GM12878 (cell line): ENCODE measurements at regions of chr9 and their contacts with region 1.

Region 1: GRCh38 chr9:117644133-117644931 is 59.9 kb upstream of the TLR4 start:
- DNase-seq: peak; percentile 21
- ATAC-seq: peak; percentile 89
- H3K4me3 ChIP-seq: no peak overlapping the region
- H3K27ac ChIP-seq: no peak overlapping the region
- H3K4me1 ChIP-seq: peaks cover 5% of the 10 kb centered on the region; the same call in 1 of the 2 replicates
- H3K27me3 ChIP-seq: no peaks in the 10 kb centered on the region
- CTCF ChIP-seq: peak; percentile 91 to 99 (median 97)
- EP300 ChIP-seq: no peak
- POLR2A ChIP-seq: no peak
- RAD21 ChIP-seq: peak; percentile 97

Region 2: GRCh38 chr9:117325110-117325731 is 319.1 kb before region 1 on chr9:
- CTCF ChIA-PET with region 1: no interaction called
- POLR2A ChIA-PET with region 1: no interaction called
- RAD21 ChIA-PET with region 1: no interaction called
- SMC1A ChIA-PET with region 1: no interaction called
- in situ Hi-C with region 1: no loop called
- intact Hi-C with region 1: no loop called
- DNase-seq: no peak
- ATAC-seq: no peak
- H3K4me3 ChIP-seq: no peak overlapping the region
- H3K27ac ChIP-seq: no peak overlapping the region
- H3K4me1 ChIP-seq: no peaks in the 10 kb centered on the region
- H3K27me3 ChIP-seq: no peaks in the 10 kb centered on the region
- CTCF ChIP-seq: no peak
- EP300 ChIP-seq: no peak
- POLR2A ChIP-seq: no peak
- RAD21 ChIP-seq: no peak

Region 3: DNA sequence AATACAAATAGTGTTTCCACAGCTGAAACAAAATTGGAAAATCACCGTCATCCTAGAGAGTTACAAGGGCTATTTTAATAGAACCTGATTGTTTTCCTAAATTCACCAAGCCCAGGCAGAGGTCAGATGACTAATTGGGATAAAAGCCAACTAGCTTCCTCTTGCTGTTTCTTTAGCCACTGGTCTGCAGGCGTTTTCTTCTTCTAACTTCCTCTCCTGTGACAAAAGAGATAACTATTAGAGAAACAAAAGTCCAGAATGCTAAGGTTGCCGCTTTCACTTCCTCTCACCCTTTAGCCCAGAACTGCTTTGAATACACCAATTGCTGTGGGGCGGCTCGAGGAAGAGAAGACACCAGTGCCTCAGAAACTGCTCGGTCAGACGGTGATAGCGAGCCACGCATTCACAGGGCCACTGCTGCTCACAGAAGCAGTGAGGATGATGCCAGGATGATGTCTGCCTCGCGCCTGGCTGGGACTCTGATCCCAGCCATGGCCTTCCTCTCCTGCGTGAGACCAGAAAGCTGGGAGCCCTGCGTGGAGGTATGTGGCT is 59.8 kb after region 1 on chr9 and contains the start of gene TLR4:
- CTCF ChIA-PET with region 1: no interaction called
- POLR2A ChIA-PET with region 1: no interaction called
- RAD21 ChIA-PET with region 1: no interaction called
- SMC1A ChIA-PET with region 1: no interaction called
- in situ Hi-C with region 1: no loop called
- intact Hi-C with region 1: loop called (anchors 5 kb)
- DNase-seq: peak; percentile 45
- ATAC-seq: peak; percentile 99
- H3K4me3 ChIP-seq: no peak within 1 kb of the TSS
- H3K27ac ChIP-seq: no peak within 1 kb of the TSS
- H3K4me1 ChIP-seq: peaks cover 3% of the 10 kb centered on the region; the same call in 1 of the 2 replicates
- H3K27me3 ChIP-seq: no peaks in the 10 kb centered on the region
- CTCF ChIP-seq: no peak
- EP300 ChIP-seq: peak; percentile 15 to 54; a peak in 2 of 4 replicates
- POLR2A ChIP-seq: no peak
- RAD21 ChIP-seq: no peak
- polyA plus RNA-seq, gene TLR4: 0.03 to 0.07 TPM

Region 4: DNA sequence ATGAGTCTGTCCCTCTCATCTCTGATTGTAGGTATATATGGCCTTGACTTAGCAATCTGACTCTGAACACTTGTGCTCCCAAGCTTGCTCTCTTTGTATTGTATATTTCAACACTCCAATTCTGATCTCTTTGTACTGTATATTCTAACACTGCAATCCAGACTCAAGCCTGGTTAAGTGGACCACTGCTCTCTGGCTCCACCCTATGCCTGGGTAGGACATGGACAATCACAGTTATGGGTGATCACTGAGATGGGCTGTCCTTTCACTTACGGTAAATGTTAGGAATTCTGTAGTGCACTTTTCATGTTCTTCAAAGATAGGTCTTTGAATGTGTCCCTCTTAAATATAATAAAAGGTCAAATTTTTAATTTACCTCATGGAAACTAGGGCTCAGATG is 225.0 kb after region 1 on chr9:
- CTCF ChIA-PET with region 1: no interaction called
- POLR2A ChIA-PET with region 1: no interaction called
- RAD21 ChIA-PET with region 1: no interaction called
- SMC1A ChIA-PET with region 1: no interaction called
- in situ Hi-C with region 1: no loop called
- intact Hi-C with region 1: loop called (anchors 5 kb)
- DNase-seq: no peak
- ATAC-seq: 0 out of 3 replicates have a peak, but pooled peaks have one; percentile 31
- H3K4me3 ChIP-seq: no peak overlapping the region
- H3K27ac ChIP-seq: no peak overlapping the region
- H3K4me1 ChIP-seq: no peaks in the 10 kb centered on the region
- H3K27me3 ChIP-seq: no peaks in the 10 kb centered on the region; a peak in 1 of 4 replicates
- CTCF ChIP-seq: peak in 1 of 3 experiments; percentile 28; a peak in 1 of 6 replicates
- EP300 ChIP-seq: no peak
- POLR2A ChIP-seq: no peak
- RAD21 ChIP-seq: no peak

Region 5: DNA sequence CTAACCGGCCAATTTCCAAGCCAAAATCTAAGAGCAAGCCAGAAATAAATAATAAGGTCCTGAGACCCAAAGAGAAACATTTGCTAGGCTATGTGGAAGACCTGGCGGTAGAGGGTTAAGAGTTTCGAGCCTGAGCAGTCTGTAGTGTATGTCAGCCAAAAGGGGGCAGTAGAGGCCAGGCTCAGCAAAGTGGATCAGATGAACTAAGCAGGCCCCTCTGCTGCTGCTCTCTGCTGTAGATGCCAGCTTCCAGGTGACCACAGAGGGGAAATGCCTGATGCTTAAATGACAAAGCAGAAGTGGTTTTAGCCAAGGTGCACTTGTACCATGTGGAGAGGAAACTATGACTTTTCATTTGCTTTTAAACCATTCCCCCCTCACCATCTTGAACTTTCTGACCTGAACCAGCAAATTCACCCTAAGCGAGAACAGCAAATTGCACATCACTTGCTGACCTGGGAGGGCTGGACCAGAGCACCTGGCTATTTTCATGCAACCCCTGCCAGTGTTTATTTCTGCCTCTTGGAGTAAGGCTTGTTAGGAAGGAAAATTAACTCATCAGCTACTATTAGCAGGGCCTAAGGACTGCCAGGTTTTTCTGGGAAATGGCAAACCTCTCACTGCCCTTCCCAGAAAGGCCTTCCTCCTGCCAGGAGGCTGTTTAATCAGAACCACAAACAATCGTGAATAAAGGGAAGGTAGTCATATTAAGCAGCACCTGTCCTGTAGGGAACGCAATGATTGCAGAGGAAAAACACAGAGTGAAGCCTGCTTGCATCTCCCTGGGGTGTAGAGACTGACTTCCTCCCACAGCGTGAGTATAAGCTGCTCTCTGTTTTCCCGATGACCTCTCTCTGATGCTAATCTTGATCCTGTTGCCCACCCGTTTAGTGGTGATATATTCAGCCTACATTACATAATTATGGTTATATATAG is 878.0 kb after region 1 on chr9:
- CTCF ChIA-PET with region 1: no interaction called
- POLR2A ChIA-PET with region 1: no interaction called
- RAD21 ChIA-PET with region 1: no interaction called
- SMC1A ChIA-PET with region 1: no interaction called
- in situ Hi-C with region 1: no loop called
- intact Hi-C with region 1: loop called (anchors 2 kb)
- DNase-seq: peak; percentile 34
- ATAC-seq: peak; percentile 100
- H3K4me3 ChIP-seq: no peak overlapping the region
- H3K27ac ChIP-seq: no peak overlapping the region
- H3K4me1 ChIP-seq: no peaks in the 10 kb centered on the region
- H3K27me3 ChIP-seq: no peaks in the 10 kb centered on the region
- CTCF ChIP-seq: peak; percentile 63 to 84 (median 71)
- EP300 ChIP-seq: no peak
- POLR2A ChIP-seq: no peak
- RAD21 ChIP-seq: peak; percentile 73

Region 6: DNA sequence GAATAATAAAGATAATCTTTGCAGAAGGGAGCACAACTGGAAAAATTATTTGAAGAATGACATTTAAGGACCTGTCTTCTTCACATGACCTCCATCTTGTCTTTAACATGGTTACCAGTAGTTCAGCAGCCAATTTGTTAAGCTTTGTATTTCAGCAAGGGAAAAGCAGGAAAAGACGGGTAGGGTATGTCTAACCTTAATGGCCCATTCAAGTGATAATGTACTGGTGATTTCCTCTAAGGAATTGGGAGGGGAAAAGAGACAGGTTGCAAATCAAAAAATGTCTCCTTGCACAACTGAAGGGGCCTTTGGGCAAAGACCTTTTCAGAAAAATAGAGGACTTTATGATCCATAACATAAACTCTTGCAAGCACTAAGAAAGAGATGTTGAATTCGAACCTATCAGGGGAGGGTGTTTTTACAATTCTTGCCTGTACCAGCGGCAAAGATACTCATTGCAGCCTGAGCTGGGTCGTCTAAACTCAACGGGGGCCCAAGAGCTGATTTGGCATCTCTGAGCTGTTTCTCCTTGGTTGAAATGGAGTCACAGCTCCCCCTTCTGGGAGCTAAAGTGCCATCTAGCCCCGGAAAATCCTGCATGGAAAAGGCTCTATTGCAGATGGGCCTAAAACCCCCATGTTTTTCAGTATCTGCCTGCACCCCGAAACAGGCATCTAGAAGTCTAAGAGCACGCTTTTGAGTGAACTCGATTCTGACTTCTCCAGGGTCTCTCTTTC is 1721.1 kb after region 1 on chr9:
- CTCF ChIA-PET with region 1: interaction called, 3 read pairs
- POLR2A ChIA-PET with region 1: no interaction called
- RAD21 ChIA-PET with region 1: no interaction called
- SMC1A ChIA-PET with region 1: no interaction called
- in situ Hi-C with region 1: no loop called
- intact Hi-C with region 1: loop called (anchors 10 kb)
- DNase-seq: no peak
- ATAC-seq: 0 out of 3 replicates have a peak, but pooled peaks have one; percentile 31
- H3K4me3 ChIP-seq: no peak overlapping the region
- H3K27ac ChIP-seq: no peak overlapping the region
- H3K4me1 ChIP-seq: no peaks in the 10 kb centered on the region
- H3K27me3 ChIP-seq: peaks cover 0 to 1% of the 10 kb centered on the region in 2 experiments; a peak in 2 of 4 replicates
- CTCF ChIP-seq: peak; percentile 37 to 49 (median 39); a peak in 4 of 6 replicates
- EP300 ChIP-seq: no peak
- POLR2A ChIP-seq: no peak
- RAD21 ChIP-seq: peak; percentile 60